Activated naive CD4-positive, alpha-beta T cell treated with anti-CD3 and anti-CD28 coated beads for 36 hours (primary cell): ENCODE measurements at regions of chr7 and their contacts with region 1.

Region 1: GRCh38 chr7:116258734-116259133 is 48.4 kb downstream of the TES start:
- DNase-seq: peak; percentile 52
- H3K4me3 Mint-ChIP-seq: no peak overlapping the region
- H3K27ac Mint-ChIP-seq: no peak overlapping the region
- H3K4me1 Mint-ChIP-seq: peaks cover 11% of the 10 kb centered on the region
- H3K27me3 Mint-ChIP-seq: no peaks in the 10 kb centered on the region

Region 2: GRCh38 chr7:116173051-116174028 is 85.4 kb before region 1 on chr7:
- CTCF ChIA-PET with region 1: interaction called, 9 read pairs
- intact Hi-C with region 1: loop called (anchors 1 kb)
- DNase-seq: peak; percentile 37
- H3K4me3 Mint-ChIP-seq: no peak overlapping the region
- H3K27ac Mint-ChIP-seq: no peak overlapping the region
- H3K4me1 Mint-ChIP-seq: no peaks in the 10 kb centered on the region
- H3K27me3 Mint-ChIP-seq: peaks cover 7% of the 10 kb centered on the region

Region 3: DNA sequence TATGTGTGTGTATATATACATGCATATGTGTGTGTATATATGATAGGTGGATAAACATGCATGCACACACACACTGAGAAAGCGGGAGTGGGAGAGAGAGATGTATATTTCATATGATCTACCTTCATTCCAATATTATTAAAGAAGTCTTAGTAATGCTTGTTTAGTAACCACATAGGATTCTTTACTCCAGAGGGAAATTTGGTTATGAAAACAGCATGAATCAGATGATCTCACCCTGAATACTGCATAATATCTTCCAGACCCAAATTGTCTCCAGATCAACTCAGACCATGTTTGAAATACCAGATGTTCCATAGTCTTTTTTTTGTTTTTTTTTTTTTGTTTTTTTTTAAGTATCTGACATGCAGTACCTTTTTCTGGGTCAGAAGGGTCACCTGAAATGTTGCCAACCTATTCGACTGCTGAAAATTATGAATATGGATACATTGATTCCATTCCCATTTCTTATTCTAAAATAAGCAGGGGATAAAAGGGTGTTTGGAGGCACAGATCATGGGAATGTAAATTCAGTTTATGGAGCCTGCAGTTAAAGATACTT is 31.0 kb before region 1 on chr7:
- CTCF ChIA-PET with region 1: no interaction called
- intact Hi-C with region 1: no loop called
- DNase-seq: no peak
- H3K4me3 Mint-ChIP-seq: no peak overlapping the region
- H3K27ac Mint-ChIP-seq: no peak overlapping the region
- H3K4me1 Mint-ChIP-seq: peaks cover 82% of the 10 kb centered on the region
- H3K27me3 Mint-ChIP-seq: no peaks in the 10 kb centered on the region

Region 4: DNA sequence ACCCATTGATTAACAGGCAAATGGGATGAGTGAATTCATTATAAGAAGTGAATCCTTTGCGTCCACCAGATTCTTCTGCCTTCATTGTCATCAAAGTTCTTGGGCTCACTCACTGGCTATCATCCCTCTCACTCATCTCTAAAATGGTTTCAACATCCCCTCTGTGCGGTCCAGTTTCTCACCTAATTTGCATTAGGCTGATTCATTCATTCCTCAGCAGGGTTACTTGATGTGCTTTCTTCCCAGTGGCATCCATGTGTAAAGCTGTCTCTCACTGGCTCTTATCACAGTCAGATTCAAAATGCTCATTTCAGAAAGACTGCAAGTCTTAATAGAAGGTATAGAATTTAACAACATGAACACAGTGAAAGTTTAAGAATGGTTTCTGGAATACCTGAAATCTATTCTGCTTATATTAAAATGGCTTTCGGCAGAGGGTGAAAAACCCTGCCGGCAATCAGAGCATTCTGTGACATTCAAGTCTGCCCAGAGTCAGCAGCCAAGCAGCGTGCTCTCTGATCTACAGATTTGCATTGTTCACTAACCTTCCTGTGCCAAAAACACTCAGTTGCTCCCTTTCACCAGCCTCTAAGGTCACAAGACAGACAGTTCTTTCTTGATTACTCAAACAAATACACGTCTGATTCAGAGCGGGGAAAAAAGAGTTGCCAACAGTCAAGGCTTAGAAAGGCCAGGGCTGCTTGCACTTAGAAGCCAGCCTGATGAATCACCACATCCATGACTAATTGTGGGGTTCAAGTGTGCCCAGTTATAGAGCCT is 58.3 kb after region 1 on chr7:
- CTCF ChIA-PET with region 1: no interaction called
- intact Hi-C with region 1: loop called (anchors 1 kb)
- DNase-seq: peak; percentile 59
- H3K4me3 Mint-ChIP-seq: no peak overlapping the region
- H3K27ac Mint-ChIP-seq: no peak overlapping the region
- H3K4me1 Mint-ChIP-seq: peaks cover 4% of the 10 kb centered on the region
- H3K27me3 Mint-ChIP-seq: peaks cover 2% of the 10 kb centered on the region

Region 5: GRCh38 chr7:116525913-116526861 is 267.5 kb after region 1 on chr7:
- CTCF ChIA-PET with region 1: interaction called, 14 read pairs
- intact Hi-C with region 1: loop called (anchors 1 kb)
- DNase-seq: peak; percentile 65
- H3K4me3 Mint-ChIP-seq: peak overlapping the region; percentile 85
- H3K27ac Mint-ChIP-seq: no peak overlapping the region
- H3K4me1 Mint-ChIP-seq: peaks cover 19% of the 10 kb centered on the region
- H3K27me3 Mint-ChIP-seq: peaks cover 62% of the 10 kb centered on the region

Region 6: DNA sequence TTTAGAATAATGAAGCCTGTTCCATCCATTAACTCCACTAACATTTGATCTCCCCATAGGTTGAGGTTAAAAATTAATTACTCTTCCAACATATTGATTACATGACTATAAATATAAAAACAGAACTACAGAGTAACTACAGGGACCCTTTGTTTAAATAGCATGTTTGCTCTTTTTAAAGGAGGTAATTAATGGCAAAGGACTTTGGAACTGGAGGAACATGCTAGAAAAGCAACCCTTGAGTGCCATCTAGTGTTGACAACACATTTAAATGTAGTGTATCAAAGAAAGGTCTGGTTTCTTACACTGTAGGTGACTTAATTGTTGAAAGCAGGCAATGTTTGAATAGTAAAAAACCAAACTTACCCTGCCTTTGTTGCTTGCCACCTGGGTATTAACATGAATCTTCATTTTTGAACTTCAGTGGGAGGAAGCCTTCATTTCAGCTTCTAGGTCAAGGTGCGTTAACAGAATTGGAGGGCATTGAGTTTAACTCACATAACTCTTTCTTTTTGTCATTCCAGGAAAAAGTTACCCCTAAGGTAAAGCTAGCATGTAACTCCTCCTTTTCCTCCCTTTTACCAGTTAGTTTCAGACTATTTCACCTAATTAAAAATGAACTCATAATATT is 551.0 kb after region 1 on chr7:
- CTCF ChIA-PET with region 1: no interaction called
- intact Hi-C with region 1: loop called (anchors 1 kb)
- DNase-seq: peak; percentile 21
- H3K4me3 Mint-ChIP-seq: no peak overlapping the region
- H3K27ac Mint-ChIP-seq: no peak overlapping the region
- H3K4me1 Mint-ChIP-seq: no peaks in the 10 kb centered on the region
- H3K27me3 Mint-ChIP-seq: no peaks in the 10 kb centered on the region